MCF 10A (cell line): ENCODE measurements at regions of chr5 and their contacts with region 1.

Region 1: DNA sequence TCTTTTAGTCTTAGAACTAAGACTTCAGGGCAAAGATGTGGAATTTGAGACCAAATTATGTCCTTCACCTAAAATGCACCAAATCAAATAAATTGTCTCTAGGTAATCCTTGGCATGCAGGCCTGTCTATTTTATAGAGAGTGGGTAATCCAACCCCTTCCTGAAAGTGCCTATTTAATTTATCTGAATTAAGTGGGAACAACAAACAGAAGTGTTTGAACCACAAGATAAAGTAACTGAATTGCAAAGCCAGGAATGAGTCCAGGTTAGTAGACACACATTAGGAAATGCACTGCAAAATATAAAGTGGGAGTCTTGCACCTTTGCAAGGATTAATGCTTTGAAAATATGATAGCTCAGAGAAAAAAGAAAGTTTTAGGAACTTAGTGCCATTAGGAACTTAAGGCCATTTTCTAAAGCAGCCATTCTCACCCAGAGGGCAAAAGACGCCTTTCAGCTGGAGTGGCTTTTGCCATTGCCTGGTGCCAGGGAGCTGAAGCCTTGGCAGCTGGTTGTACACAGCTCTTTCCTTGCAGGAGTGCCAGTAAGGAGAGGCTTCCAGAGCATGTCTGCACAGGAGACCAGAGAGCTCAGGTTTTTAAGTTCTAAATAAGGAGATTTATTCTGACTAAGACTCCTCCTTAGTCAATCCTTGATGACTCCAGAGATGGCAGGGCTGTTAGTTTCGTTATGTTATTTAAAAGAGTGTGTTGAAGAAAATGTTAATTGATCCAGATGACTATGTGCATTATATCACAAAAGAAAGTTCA is 151.7 kb upstream of the ELL2 start:
- DNase-seq: peak; percentile 73
- H3K4me3 Mint-ChIP-seq: no peak overlapping the region
- H3K27ac Mint-ChIP-seq: peak overlapping the region; percentile 87
- H3K4me1 Mint-ChIP-seq: peaks cover 29% of the 10 kb centered on the region
- H3K27me3 Mint-ChIP-seq: no peaks in the 10 kb centered on the region
- CTCF ChIP-seq: no peak

Region 2: DNA sequence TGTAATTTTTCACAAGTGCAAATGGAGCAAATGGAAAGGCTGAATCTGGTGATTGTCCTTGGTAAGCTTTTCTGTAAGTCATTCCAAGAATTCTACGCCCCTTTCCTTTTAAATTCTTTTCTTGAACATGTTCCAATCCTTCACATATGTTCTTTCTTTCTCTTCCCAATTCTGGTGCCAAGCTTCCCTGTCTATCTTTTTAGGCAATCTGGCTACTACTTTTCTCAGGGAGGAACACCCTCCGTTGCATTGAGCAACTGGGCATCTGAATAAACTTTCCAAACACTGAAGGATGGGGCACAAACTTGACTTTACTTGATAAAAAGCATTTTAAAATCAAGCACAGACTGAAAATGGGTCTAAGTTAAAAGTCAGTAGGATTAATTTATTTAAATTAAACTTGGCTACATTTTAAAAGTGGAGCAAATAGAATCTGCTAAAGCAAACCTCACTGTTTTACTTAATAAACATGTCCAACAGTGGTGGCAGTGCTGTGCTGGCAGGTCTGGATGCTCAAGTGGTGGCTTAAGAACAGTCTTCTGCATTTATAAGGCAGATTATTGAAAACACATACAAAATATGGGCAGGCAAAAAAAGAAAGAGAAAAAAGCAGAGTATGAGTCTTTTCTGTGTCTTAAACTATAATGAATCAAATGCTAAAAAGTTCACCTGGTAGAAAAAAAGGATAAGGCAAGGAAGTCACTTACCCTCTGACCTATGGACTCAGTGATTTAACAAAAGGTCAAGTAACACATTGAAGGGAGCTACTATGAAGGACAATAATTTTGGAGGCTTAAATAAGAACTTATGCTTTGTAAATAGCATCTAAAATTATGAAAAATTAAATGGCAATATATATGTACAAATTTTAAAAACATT is 157.1 kb before region 1 on chr5:
- CTCF ChIA-PET with region 1: interaction called, 7 read pairs
- POLR2A ChIA-PET with region 1: interaction called, 12 read pairs
- intact Hi-C with region 1: loop called (anchors 1 kb)
- DNase-seq: peak; percentile 61
- H3K4me3 Mint-ChIP-seq: peak overlapping the region; percentile 62
- H3K27ac Mint-ChIP-seq: peak overlapping the region; percentile 87
- H3K4me1 Mint-ChIP-seq: peaks cover 60% of the 10 kb centered on the region
- H3K27me3 Mint-ChIP-seq: no peaks in the 10 kb centered on the region
- CTCF ChIP-seq: no peak

Region 3: DNA sequence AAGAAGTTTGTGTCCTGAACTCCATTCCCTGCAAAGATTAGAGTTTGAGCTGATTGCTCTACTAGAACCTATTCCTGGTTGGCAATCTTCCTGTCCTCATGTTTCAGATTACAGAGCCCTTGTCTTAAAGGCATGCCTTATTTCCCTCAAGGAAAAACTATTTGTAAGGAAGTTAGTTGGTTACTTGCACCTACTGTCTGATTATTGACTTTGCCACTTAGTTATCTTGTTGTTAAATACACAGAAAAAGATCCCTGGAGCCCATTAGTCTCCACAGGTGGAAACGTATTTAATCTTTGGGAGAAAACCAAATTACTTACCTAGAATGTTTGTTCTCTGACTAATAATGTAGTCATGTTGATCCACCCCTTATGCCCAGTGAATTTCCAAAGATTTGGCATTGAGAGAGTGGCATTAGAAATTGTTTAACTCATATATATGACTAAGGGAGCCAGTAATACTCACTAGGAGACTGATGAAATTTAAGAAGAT is 19.4 kb before region 1 on chr5:
- CTCF ChIA-PET with region 1: interaction called, 10 read pairs
- POLR2A ChIA-PET with region 1: interaction called, 30 read pairs
- intact Hi-C with region 1: no loop called
- DNase-seq: peak; percentile 90
- H3K4me3 Mint-ChIP-seq: no peak overlapping the region
- H3K27ac Mint-ChIP-seq: peak overlapping the region; percentile 1
- H3K4me1 Mint-ChIP-seq: peaks cover 28% of the 10 kb centered on the region
- H3K27me3 Mint-ChIP-seq: no peaks in the 10 kb centered on the region
- CTCF ChIP-seq: no peak

Region 4: GRCh38 chr5:96146675-96147074 is 33.3 kb after region 1 on chr5:
- CTCF ChIA-PET with region 1: no interaction called
- POLR2A ChIA-PET with region 1: interaction called, 14 read pairs
- intact Hi-C with region 1: no loop called
- DNase-seq: peak; percentile 41
- H3K4me3 Mint-ChIP-seq: no peak overlapping the region
- H3K27ac Mint-ChIP-seq: no peak overlapping the region
- H3K4me1 Mint-ChIP-seq: peaks cover 27% of the 10 kb centered on the region
- H3K27me3 Mint-ChIP-seq: no peaks in the 10 kb centered on the region
- CTCF ChIP-seq: no peak

Region 5: GRCh38 chr5:96151891-96152290 is 38.5 kb after region 1 on chr5:
- CTCF ChIA-PET with region 1: no interaction called
- POLR2A ChIA-PET with region 1: interaction called, 11 read pairs
- intact Hi-C with region 1: no loop called
- DNase-seq: no peak
- H3K4me3 Mint-ChIP-seq: no peak overlapping the region
- H3K27ac Mint-ChIP-seq: no peak overlapping the region
- H3K4me1 Mint-ChIP-seq: peaks cover 28% of the 10 kb centered on the region
- H3K27me3 Mint-ChIP-seq: no peaks in the 10 kb centered on the region
- CTCF ChIP-seq: no peak